ENCODE measurements at regions of chr9 and their contacts with region 1.

Region 1: DNA sequence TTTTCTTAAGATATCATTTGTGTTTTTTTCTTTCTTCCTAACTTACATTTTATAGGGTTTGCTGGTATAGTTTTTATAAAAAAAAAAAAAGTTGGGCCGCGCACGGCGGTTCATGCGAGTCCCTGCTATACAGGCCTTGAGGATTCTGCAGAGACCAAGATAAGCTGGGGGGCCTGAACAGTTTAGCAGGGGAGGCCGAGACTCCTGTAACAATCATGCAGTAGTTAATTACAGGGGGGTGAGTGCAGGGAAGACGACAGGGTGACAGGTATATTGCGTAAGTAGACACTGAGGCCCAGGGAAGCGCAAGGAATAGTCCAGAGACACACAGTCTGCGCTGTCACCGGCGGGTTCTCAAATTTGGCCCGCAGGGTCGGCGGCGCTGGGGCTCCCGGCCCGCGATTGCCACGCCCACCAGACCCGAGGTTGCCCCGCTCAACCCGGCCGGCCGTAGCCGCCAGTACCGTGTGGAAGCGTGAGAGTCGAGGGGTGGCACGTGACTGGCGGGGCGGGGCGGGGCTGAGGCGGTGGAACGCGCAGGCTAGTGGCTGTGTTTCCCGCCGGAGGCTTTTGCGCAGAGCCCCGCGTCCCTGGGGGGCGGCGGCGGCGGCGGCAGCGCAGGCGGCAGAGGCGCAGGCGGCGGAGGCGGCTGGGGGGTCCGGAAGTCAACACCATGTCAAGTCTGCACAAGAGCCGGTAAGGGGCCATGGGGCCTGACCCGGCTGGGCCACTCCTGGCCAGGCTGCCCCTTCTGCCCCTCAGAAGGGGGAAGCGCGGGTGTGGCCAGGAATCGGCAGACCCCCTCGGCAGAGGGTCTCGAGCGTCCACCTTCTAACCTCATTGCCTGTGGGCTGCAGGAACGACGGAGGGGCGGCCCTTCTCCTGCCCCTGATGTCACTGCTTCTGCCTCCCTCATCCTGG is at the start of gene TBC1D13:
- DNase-seq: peak; percentile 95
- ATAC-seq: peak; percentile 95
- H3K4me3 Mint-ChIP-seq: peak within 1 kb of the TSS; percentile 100
- H3K27ac Mint-ChIP-seq: peak within 1 kb of the TSS; percentile 96
- H3K4me1 Mint-ChIP-seq: peaks cover 5% of the 10 kb centered on the region
- H3K27me3 Mint-ChIP-seq: no peaks in the 10 kb centered on the region
- total RNA-seq, gene TBC1D13: 26.1 to 29.2 TPM

Region 2: DNA sequence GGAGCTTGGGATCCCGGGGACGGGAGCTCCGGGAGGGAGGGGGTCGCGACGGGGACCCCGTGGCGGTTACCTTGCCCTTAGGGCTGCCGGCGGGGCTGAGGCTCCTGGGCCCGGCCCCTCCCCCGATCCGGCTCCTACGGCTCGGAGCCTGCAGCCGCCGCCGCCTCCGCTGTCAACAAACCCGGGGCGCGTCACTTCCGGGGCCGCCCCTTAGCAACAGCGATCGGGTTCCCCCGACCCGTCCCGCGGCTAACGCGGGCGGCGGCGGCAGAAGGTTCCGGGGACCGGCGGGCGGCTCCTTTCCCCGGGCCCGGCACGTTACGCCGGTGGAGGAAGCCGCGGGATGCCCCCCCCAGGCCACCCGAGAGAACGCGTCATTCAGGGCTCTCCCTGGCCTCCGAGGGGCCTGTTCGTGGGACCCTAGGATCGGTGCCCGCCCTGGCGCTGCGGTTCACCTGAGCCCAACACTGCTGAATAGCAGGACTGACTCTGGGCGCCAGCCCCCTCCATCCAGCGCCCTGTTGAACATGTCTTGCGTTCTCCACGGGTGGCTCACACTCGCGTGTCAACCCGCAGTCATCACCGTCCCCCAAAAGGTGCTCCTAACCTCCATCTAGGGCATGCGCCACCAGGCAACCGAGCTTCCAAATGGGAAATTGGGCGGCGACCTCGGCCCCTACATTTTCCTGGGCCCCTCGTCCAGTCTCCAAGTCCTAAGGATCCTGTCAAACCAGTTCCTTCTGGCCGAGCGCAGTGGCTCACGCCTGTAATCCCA is 15.0 kb before region 1 on chr9 and contains the start of gene ZER1:
- POLR2A ChIA-PET with region 1: interaction called, 18 read pairs
- DNase-seq: peak; percentile 98
- ATAC-seq: peak; percentile 90
- H3K4me3 Mint-ChIP-seq: peak within 1 kb of the TSS; percentile 98
- H3K27ac Mint-ChIP-seq: peak within 1 kb of the TSS; percentile 97
- H3K4me1 Mint-ChIP-seq: peaks cover 14% of the 10 kb centered on the region
- H3K27me3 Mint-ChIP-seq: no peaks in the 10 kb centered on the region
- total RNA-seq, gene ZER1: 27.1 to 29.2 TPM

Region 3: GRCh38 chr9:128809832-128810231 is 22.9 kb after region 1 on chr9:
- POLR2A ChIA-PET with region 1: no interaction called
- DNase-seq: no peak
- ATAC-seq: no peak
- H3K4me3 Mint-ChIP-seq: no peak overlapping the region
- H3K27ac Mint-ChIP-seq: no peak overlapping the region
- H3K4me1 Mint-ChIP-seq: no peaks in the 10 kb centered on the region
- H3K27me3 Mint-ChIP-seq: no peaks in the 10 kb centered on the region